ENCODE measurements at regions of chr17 and their contacts with region 1.

Region 1: GRCh38 chr17:76523084-76524037 is 14.1 kb downstream of the CYGB start:
- DNase-seq: no peak
- H3K4me3 ChIP-seq: peak overlapping the region; percentile 27; the same call in 1 of the 2 replicates
- CTCF ChIP-seq: peak; percentile 99

Region 2: DNA sequence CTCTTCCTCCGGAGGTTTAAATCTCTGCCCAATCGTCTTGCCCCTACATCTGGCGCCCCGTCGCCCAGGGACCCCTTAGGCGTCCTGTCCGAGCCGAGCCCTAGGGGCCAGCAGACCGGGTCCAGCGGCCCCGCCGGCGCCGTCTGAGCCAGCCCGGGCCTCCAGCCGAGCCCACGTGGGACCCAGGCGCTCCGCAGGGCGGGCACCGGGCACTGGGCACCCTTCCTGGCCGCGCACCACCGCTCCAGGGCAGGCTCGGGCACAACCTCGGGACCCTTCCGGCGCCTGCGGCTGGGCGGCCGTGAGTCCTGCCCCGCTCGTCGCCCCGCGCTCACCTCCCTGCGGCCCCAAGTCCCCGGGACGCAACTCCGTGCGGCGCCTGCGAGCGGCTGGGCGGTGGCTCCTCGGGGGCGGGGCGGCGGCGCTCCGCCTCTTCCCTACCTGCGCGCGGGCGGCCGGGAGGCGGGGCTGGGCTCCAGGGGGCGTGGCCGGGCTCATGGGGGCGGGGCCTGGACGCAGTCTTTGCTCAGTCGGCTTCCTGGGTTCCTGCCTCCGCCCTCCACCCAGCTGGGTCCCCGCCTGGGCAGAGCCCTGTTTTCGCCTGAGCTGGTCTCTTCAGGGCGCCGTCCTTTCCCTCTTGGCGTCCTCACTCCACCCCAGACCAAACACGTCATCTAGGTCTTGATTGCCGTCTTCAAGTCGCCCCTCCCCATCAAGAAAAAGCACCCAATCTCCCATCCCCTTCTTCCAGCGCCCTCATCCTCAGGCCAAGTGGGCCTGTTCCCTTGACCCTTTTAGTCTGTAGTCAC is 22.1 kb before region 1 on chr17 and contains the start of gene RHBDF2:
- CTCF ChIA-PET with region 1: interaction called, 30 read pairs
- POLR2A ChIA-PET with region 1: no interaction called
- DNase-seq: no peak
- H3K4me3 ChIP-seq: peak within 1 kb of the TSS; percentile 66
- CTCF ChIP-seq: no peak

Region 3: GRCh38 chr17:76506408-76507349 is 16.7 kb before region 1 on chr17:
- CTCF ChIA-PET with region 1: interaction called, 74 read pairs
- POLR2A ChIA-PET with region 1: no interaction called
- DNase-seq: no peak
- H3K4me3 ChIP-seq: no peak overlapping the region
- CTCF ChIP-seq: peak; percentile 91

Region 4: GRCh38 chr17:76540381-76541300 is 17.3 kb after region 1 on chr17:
- CTCF ChIA-PET with region 1: interaction called, 180 read pairs
- POLR2A ChIA-PET with region 1: interaction called, 7 read pairs
- DNase-seq: no peak
- H3K4me3 ChIP-seq: peak overlapping the region; percentile 51
- CTCF ChIP-seq: peak; percentile 30

Region 5: GRCh38 chr17:76547184-76547641 is 23.9 kb after region 1 on chr17:
- CTCF ChIA-PET with region 1: interaction called, 180 read pairs
- POLR2A ChIA-PET with region 1: interaction called, 7 read pairs
- DNase-seq: no peak
- H3K4me3 ChIP-seq: no peak overlapping the region
- CTCF ChIP-seq: peak; percentile 68

Region 6: DNA sequence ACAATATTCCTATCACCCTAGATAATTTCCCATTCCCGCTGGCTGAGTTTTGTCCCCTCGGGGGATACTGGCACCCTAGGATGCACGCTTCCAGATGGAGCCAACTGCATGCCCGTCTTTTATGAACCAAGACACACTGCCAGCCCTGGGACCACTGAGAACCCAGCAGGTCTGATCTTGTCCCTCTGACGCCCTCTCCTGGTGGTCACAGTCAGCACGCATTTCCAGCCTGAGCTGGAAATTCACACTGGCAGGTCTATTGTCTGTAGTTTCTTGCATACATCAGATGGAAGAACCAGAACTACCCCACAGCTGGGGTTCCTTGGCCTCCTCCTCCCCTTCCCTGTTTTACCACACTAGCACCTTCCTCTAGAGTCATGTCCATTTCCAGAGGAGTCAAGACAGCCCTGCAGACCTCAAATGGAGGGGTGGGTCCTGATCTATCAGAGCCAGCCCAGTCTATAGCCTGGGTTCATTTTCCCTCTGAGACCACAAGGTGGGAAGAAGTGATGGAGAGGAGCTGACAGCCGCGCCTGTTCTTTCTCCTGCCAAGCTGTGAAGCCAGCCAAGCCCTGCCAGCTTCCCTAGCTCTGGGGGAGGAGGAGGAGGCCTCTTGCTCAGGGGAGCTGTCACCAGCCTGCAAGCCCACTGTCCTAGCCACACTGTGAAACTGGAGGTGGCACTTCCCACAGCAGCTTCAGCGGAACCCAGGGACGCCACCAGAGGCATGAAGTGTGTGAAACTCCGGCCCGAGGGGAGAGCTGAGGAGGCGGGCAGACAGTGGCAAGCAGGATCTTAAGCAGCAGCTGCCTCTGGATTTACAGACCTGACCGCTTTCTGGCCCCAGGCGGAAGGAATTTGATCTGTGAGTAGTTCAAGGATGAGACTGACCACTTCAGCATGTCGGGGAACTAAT is 158.1 kb after region 1 on chr17:
- CTCF ChIA-PET with region 1: interaction called, 18 read pairs
- POLR2A ChIA-PET with region 1: no interaction called
- DNase-seq: no peak
- H3K4me3 ChIP-seq: no peak overlapping the region
- CTCF ChIP-seq: peak; percentile 76

Region 7: DNA sequence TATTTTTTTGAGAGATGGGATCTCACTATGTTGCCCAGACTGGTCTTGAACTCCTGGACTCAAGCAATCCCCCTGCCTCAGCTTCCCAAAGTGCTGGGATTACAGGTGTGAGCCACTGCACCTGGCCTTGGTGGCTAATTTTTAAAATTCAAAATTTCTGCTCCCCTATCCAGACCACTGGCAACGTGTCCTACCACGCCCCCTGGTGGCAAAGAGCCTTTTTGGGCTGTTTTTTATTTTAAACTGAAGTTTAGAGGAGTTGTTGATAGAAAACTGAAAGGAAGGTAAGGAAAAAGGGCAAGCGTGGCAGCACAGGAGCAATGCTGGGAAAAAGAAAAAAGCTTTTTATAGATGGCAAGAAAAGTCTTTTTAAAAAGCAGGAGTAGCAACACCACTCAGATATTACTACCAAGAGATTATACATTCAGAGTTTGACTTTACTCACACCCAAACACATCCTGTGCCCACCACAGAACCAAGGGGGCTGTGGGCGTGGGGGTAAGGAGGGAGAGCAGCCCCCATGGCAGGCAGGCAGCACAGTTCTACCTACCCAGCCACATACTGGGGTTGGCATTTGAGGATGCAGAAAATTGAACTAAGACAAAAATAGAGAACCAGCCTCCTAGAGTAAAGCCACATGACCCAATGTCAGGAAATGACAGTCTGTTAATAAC is 191.6 kb after region 1 on chr17:
- CTCF ChIA-PET with region 1: interaction called, 16 read pairs
- POLR2A ChIA-PET with region 1: no interaction called
- DNase-seq: no peak
- H3K4me3 ChIP-seq: no peak overlapping the region
- CTCF ChIP-seq: peak; percentile 61